ENCODE measurements at regions of chr12 and their contacts with region 1.

Region 1: DNA sequence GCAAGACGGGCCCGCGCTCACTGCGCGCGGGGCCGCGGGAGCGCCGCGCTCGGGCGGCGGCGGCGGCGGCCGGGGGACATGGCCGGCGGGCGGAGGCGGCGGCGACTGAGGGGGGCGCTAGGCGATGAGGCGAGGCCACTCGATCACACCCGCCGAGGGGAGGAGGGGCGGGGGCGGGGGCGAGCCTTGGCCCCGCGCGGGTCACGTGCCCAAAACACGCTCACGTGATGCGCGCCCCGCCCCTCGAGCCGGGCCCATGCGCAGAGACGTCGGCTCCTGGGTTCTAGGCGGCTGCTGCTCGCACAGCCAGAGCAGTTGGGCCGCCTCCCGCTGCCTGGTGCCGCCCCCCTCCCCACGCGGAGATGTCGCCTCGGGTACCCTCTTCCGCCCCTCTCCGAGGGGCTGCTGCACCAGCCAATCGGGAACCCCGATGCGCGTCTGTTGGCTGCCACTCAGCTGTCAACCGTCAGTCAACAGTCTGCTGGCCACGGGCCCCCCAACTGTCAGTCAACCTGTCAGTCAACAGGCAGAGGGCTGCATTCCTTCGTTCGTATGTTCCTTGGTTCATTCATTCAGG is at the start of gene SPPL3:
- DNase-seq: peak; percentile 88
- H3K4me3 Mint-ChIP-seq: peak within 1 kb of the TSS; percentile 100
- H3K27ac Mint-ChIP-seq: peak within 1 kb of the TSS; percentile 94
- H3K4me1 Mint-ChIP-seq: peaks cover 21% of the 10 kb centered on the region
- H3K27me3 Mint-ChIP-seq: peaks cover 2% of the 10 kb centered on the region
- total RNA-seq, gene SPPL3: 27.3 and 31.2 TPM in 2 replicates

Region 2: GRCh38 chr12:120649442-120650232 is 254.6 kb before region 1 on chr12:
- intact Hi-C with region 1: loop called (anchors 5 kb)
- DNase-seq: no peak
- H3K4me3 Mint-ChIP-seq: no peak overlapping the region
- H3K27ac Mint-ChIP-seq: no peak overlapping the region
- H3K4me1 Mint-ChIP-seq: peaks cover 15% of the 10 kb centered on the region
- H3K27me3 Mint-ChIP-seq: peaks cover 54% of the 10 kb centered on the region

Region 3: DNA sequence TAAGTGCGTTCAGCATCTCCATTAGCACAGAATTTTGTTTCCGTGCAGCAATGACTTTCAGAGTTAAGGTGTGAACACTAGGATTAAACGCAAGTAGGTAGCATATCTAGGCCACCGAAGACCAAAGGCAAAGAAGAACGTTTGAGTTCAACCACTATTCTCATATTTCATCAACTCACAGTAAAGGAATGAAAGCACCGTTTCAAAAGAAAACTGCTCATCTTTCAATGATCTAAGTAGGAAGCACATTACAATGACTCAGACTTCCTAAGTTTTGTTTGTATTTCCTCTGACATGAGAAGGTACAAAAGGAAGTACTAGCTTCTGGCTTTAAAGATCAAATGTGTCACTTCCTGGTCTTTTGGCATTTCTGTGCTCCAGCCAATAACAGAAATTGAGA is 121.1 kb before region 1 on chr12:
- intact Hi-C with region 1: loop called (anchors 5 kb)
- DNase-seq: no peak
- H3K4me3 Mint-ChIP-seq: no peak overlapping the region
- H3K27ac Mint-ChIP-seq: peak overlapping the region; percentile 15
- H3K4me1 Mint-ChIP-seq: peaks cover 15% of the 10 kb centered on the region
- H3K27me3 Mint-ChIP-seq: no peaks in the 10 kb centered on the region

Region 4: GRCh38 chr12:120944645-120945231 is 40.5 kb after region 1 on chr12:
- intact Hi-C with region 1: no loop called
- DNase-seq: peak; percentile 46
- H3K4me3 Mint-ChIP-seq: no peak overlapping the region
- H3K27ac Mint-ChIP-seq: no peak overlapping the region
- H3K4me1 Mint-ChIP-seq: peaks cover 5% of the 10 kb centered on the region
- H3K27me3 Mint-ChIP-seq: peaks cover 4% of the 10 kb centered on the region

Region 5: GRCh38 chr12:120971299-120972179 is 67.3 kb after region 1 on chr12:
- intact Hi-C with region 1: loop called (anchors 5 kb)
- DNase-seq: peak; percentile 17
- H3K4me3 Mint-ChIP-seq: no peak overlapping the region
- H3K27ac Mint-ChIP-seq: no peak overlapping the region
- H3K4me1 Mint-ChIP-seq: peaks cover 7% of the 10 kb centered on the region
- H3K27me3 Mint-ChIP-seq: peaks cover 8% of the 10 kb centered on the region

Region 6: GRCh38 chr12:121095544-121096198 is 191.4 kb after region 1 on chr12:
- intact Hi-C with region 1: loop called (anchors 5 kb)
- DNase-seq: peak; percentile 74
- H3K4me3 Mint-ChIP-seq: peak overlapping the region; percentile 82
- H3K27ac Mint-ChIP-seq: peak overlapping the region; percentile 61
- H3K4me1 Mint-ChIP-seq: peaks cover 33% of the 10 kb centered on the region
- H3K27me3 Mint-ChIP-seq: peaks cover 4% of the 10 kb centered on the region

Region 7: GRCh38 chr12:121729021-121729420 is 824.7 kb after region 1 on chr12:
- intact Hi-C with region 1: no loop called
- DNase-seq: no peak
- H3K4me3 Mint-ChIP-seq: no peak overlapping the region
- H3K27ac Mint-ChIP-seq: no peak overlapping the region
- H3K4me1 Mint-ChIP-seq: no peaks in the 10 kb centered on the region
- H3K27me3 Mint-ChIP-seq: no peaks in the 10 kb centered on the region

Measured in activated T-helper 1 cell treated with anti-CD3 and anti-CD28 coated beads, Interleukin-12 subunit alpha, Interleukin-12 subunit beta, Interleukin-2, Interleukin-4 antibody, amounts not matched to agents 30 ng/mL and 10 ng/mL and 1 ng/mL, durations not matched to agents 14 hours and 24 hours and 36 hours (primary cell).